Naive thymus-derived CD4-positive, alpha-beta T cell (primary cell): ENCODE measurements at regions of chr4 and their contacts with region 1.

Region 1: DNA sequence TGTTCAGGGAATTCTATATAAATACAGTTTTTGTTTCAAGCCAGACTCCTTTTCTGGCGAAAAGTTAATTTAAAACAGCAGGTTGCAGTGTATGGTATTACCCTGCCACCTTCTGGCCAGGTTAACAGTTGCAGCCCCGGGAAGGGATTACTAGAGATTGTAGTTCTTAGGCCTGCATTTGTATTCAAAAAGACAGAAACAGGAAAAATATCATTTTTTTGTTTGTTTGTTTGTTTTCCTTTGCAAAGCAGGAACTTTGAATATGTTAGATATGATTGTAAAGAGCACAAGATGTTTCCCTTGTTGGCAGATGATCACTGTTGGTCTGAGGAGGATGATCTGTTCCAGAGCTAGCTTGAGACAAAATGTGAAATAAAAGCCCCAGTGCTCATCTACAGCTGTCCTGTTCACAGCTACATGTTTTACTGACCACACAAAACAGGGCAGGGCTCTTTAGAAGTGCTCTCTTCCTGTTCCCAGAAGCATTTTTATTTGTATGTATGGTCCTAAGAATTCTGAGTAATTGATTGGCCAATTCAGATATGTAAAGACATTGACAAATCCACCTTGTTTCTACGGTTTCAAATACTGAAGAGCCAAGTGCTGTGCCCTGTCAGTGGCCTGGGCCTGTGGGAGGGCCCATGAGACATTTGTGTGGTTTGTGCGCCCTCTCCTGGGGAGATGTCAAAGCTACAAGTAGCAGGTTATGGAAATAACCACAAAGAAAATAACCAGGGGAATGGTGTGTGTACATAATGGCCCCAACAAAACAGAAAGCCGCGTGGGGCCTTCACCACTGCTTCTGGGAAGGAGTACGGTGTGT is 57.9 kb downstream of the CLDN22 start:
- DNase-seq: peak; percentile 41 to 72 (median 66)
- ATAC-seq: peak; percentile 95
- H3K4me3 ChIP-seq: no peak overlapping the region
- H3K4me3 Mint-ChIP-seq: no peak overlapping the region
- H3K27ac ChIP-seq: no peak overlapping the region
- H3K27ac Mint-ChIP-seq: peak overlapping the region in 8 of 9 donors; percentile 15 to 87 (median 78)
- H3K4me1 ChIP-seq: peaks cover 0 to 5% of the 10 kb centered on the region in 2 donors
- H3K4me1 Mint-ChIP-seq: peaks cover 3 to 12% (median 8%) of the 10 kb centered on the region in 7 donors
- H3K27me3 ChIP-seq: no peaks in the 10 kb centered on the region
- H3K27me3 Mint-ChIP-seq: peaks cover 0 to 4% (median 0%) of the 10 kb centered on the region in 5 donors

Region 2: DNA sequence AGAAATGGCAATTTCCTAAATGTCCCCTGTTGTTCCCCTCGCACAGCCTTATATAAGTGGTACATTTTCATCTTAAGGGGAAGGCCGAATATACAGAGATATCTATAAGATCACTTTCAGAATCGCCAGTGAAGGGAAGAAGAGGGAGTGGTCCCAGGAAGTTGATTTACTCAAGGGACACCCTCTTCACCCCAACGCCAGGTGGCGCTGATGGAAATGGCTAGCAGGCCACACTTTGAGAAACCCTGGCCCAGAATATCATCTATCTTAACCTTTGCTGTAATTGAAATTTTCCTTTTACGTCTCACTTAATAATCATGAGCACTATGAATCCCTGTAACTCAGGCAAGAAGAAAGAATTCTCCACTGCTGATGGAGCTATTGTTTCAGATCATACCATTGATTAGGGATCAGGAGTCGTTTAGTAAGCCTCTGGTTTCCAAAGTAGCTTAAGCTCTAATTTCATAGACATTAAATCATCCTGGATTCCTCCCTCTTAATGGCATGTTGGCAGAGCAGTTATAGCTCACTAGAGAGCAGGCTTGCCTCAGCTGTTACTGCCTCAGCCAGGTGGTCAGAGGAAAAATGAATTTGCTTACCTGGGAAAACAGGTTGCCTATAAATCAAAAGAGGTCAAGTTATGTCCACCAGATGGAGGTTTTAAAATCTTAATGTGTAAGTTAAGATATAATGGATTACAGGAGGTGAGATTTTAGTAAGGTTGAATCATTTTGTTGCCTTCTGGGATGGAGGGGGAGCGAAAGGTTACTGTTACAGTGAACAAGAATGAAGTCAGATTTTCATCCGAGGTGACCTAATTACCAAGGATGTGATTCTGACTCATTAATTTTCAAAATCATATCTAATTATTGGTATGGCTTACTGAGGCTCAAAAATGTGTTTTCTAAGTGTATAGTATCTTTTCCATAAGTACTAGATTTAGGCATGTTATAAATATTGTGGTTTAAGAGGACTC is 1960.1 kb before region 1 on chr4:
- CTCF ChIA-PET with region 1: no interaction called
- POLR2A ChIA-PET with region 1: no interaction called
- intact Hi-C with region 1: loop called in 1 of 2 experiments (anchors 5 kb)
- DNase-seq: no peak
- ATAC-seq: no peak
- H3K4me3 ChIP-seq: no peak overlapping the region
- H3K4me3 Mint-ChIP-seq: no peak overlapping the region
- H3K27ac ChIP-seq: no peak overlapping the region
- H3K27ac Mint-ChIP-seq: peak overlapping the region in 1 of 9 donors; percentile 25
- H3K4me1 ChIP-seq: no peaks in the 10 kb centered on the region
- H3K4me1 Mint-ChIP-seq: no peaks in the 10 kb centered on the region
- H3K27me3 ChIP-seq: no peaks in the 10 kb centered on the region
- H3K27me3 Mint-ChIP-seq: no peaks in the 10 kb centered on the region

Region 3: GRCh38 chr4:182806259-182807252 is 455.6 kb before region 1 on chr4:
- CTCF ChIA-PET with region 1: no interaction called
- POLR2A ChIA-PET with region 1: no interaction called
- intact Hi-C with region 1: loop called in 1 of 2 experiments (anchors 5 kb)
- DNase-seq: peak in 8 of 9 donors; percentile 24 to 74 (median 45)
- ATAC-seq: peak; percentile 47
- H3K4me3 ChIP-seq: no peak overlapping the region
- H3K4me3 Mint-ChIP-seq: peak overlapping the region; percentile 64 to 93 (median 80)
- H3K27ac ChIP-seq: no peak overlapping the region
- H3K27ac Mint-ChIP-seq: peak overlapping the region in 6 of 9 donors; percentile 68 to 79 (median 72)
- H3K4me1 ChIP-seq: peaks cover 8 to 16% of the 10 kb centered on the region in 2 donors
- H3K4me1 Mint-ChIP-seq: peaks cover 0 to 20% (median 8%) of the 10 kb centered on the region in 7 donors
- H3K27me3 ChIP-seq: no peaks in the 10 kb centered on the region
- H3K27me3 Mint-ChIP-seq: peaks cover 0 to 13% (median 4%) of the 10 kb centered on the region in 5 donors

Region 4: DNA sequence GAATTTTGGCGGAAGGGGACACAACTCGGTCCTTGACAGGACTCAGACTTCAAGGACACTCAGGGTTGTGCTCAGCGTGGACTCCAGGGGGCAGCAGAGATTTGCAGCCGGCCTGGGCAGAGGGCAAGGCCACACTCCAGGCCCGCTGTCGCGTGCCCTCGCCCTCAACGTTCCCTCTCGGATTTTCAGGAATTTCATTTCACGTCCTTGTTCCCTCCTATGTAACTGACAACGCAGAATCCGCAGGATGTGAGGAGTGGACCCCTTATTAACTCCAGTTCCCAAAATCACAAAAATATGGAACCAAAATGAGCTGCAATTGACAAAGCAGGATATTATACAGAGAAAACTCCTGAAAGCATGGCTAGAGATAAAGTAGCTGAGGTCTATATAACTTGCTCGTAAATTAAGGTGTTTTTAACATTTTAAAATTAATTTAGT is 323.9 kb before region 1 on chr4:
- CTCF ChIA-PET with region 1: interaction called, 16 read pairs
- POLR2A ChIA-PET with region 1: no interaction called
- intact Hi-C with region 1: loop called (anchors 1 kb)
- DNase-seq: peak; percentile 26 to 76 (median 48)
- ATAC-seq: peak; percentile 96
- H3K4me3 ChIP-seq: no peak overlapping the region
- H3K4me3 Mint-ChIP-seq: peak overlapping the region in 1 of 10 donors; percentile 21
- H3K27ac ChIP-seq: no peak overlapping the region
- H3K27ac Mint-ChIP-seq: no peak overlapping the region
- H3K4me1 ChIP-seq: no peaks in the 10 kb centered on the region
- H3K4me1 Mint-ChIP-seq: peaks cover 0 to 4% (median 0%) of the 10 kb centered on the region in 7 donors
- H3K27me3 ChIP-seq: no peaks in the 10 kb centered on the region
- H3K27me3 Mint-ChIP-seq: peaks cover 12 to 27% (median 15%) of the 10 kb centered on the region in 5 donors

Region 5: DNA sequence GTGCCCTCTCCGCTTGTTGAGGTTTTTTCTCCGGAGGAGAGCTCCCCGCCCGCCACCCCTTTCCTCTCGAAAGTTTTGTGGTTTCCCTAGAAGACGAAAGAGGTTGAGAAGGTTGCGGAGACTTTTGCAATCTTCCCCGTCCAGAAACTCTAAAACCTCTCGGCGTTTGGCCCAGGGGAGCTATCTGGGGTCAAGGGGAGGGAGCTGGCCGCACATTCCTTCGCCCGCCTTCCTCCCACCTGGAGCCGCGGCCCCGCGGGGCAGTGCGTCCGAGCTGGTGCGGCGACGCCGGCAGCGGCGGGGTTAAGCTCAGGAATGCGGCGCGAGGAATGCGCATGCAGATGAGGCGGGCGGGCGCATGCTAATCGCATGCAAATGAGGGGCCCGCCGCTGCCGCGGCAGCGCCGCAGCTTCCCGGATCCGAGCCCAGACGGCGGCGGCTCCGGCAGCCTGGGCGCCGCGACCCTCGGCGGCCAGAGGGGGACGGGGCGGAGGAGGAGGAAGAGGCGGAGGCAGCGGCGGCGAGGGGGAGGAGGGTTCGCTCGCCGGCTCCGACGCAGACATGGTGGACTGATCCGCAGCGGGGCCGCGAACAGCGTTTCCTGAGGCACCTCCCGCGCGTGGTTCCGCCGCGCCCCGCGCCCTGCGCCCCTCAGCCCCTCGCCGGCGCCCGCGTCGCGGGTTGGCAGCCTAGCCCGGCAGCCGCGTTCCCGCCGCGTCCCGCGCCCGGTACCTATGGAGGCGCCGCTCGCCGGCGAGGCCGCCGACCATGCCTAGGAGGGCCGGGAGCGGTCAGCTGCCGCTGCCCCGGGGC is 163.2 kb before region 1 on chr4 and contains the start of gene WWC2:
- CTCF ChIA-PET with region 1: interaction called, 4 read pairs
- POLR2A ChIA-PET with region 1: no interaction called
- intact Hi-C with region 1: loop called in 1 of 2 experiments (anchors 1 kb)
- DNase-seq: peak; percentile 40 to 68 (median 62)
- ATAC-seq: peak; percentile 85
- H3K4me3 ChIP-seq: peak within 1 kb of the TSS; percentile 75
- H3K4me3 Mint-ChIP-seq: peak within 1 kb of the TSS; percentile 51 to 87 (median 83)
- H3K27ac ChIP-seq: peak within 1 kb of the TSS; percentile 48
- H3K27ac Mint-ChIP-seq: peak within 1 kb of the TSS in 3 of 9 donors; percentile 56 to 72 (median 68)
- H3K4me1 ChIP-seq: peaks cover 0 to 4% of the 10 kb centered on the region in 2 donors
- H3K4me1 Mint-ChIP-seq: peaks cover 3 to 53% (median 34%) of the 10 kb centered on the region in 7 donors
- H3K27me3 ChIP-seq: peaks cover 0 to 2% of the 10 kb centered on the region in 2 donors
- H3K27me3 Mint-ChIP-seq: peaks cover 0 to 61% (median 0%) of the 10 kb centered on the region in 5 donors
- total RNA-seq, gene WWC2: 0.07 to 13.8 (median 10.9) TPM

Region 6: DNA sequence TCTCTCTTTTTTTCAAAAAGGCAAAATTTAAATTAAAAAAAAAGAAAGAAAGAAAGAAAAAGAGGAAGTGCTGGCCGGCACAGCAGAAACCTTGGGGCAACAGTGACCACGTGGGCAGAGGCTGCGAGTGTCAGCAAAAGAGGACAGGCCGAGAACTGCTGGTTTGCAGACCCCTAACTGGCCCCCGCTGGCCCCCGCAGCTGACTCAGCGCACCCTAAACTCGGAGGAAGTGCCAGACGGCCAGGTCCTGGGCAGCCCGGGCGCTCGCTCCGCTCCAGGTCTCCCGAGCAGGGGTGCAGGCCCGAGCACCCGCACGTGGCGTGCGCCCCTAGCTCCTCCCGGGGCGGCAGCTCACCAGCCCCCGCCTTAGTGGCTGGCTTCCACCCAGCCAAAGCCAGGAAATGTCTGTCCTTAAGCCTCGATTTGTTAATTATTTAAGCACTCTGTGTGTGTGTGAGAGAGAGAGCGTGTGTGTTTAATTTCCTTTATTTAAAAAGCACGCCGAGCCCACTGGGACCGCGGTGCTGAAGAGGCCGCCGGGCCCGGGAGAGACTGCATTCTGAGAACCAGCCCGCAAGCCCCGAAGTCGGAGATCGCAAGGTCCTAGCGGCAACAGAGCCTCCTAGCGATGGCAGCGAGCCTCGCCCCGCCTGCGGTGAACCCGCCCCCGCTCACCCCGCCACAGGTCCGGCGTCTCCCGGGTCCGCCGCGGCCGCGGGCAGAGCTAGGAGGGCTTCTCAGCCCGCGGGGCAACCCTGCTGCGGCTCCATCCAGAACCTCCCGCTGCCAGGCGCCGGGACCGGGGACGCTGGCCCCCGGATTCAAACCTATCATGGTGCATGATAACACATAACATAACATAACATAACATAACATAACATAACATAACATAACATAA is 136.3 kb after region 1 on chr4:
- CTCF ChIA-PET with region 1: interaction called, 3 read pairs
- POLR2A ChIA-PET with region 1: no interaction called
- intact Hi-C with region 1: loop called (anchors 1 to 2 kb)
- DNase-seq: peak; percentile 32 to 70 (median 57)
- ATAC-seq: peak; percentile 88
- H3K4me3 ChIP-seq: peak overlapping the region; percentile 76
- H3K4me3 Mint-ChIP-seq: peak overlapping the region; percentile 86 to 93 (median 90)
- H3K27ac ChIP-seq: peak overlapping the region; percentile 34
- H3K27ac Mint-ChIP-seq: peak overlapping the region; percentile 65 to 95 (median 82)
- H3K4me1 ChIP-seq: peaks cover 0 to 6% of the 10 kb centered on the region in 2 donors
- H3K4me1 Mint-ChIP-seq: peaks cover 17 to 34% (median 28%) of the 10 kb centered on the region in 7 donors
- H3K27me3 ChIP-seq: no peaks in the 10 kb centered on the region
- H3K27me3 Mint-ChIP-seq: peaks cover 0 to 45% (median 0%) of the 10 kb centered on the region in 5 donors

Region 7: DNA sequence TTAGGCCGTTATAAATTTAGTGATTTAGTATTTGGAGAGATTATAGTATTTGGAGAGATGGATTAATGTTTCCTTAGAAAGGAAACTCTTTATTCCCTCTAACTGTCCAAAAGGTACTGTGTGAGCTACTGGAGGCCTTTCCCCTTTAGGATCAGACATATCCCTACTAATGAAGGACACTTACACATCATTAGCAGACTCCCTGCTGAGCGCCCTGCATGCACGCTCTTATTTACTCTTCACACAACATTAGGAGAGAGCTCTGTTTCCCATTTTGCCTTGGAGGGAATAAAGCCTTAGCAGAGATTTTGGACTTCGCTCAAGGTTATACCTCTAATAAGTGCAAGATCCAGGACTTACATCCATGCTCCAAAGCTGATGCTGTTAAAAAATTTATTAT is 625.2 kb after region 1 on chr4:
- CTCF ChIA-PET with region 1: no interaction called
- POLR2A ChIA-PET with region 1: no interaction called
- intact Hi-C with region 1: no loop called
- DNase-seq: no peak
- ATAC-seq: no peak
- H3K4me3 ChIP-seq: no peak overlapping the region
- H3K4me3 Mint-ChIP-seq: no peak overlapping the region
- H3K27ac ChIP-seq: no peak overlapping the region
- H3K27ac Mint-ChIP-seq: no peak overlapping the region
- H3K4me1 ChIP-seq: no peaks in the 10 kb centered on the region
- H3K4me1 Mint-ChIP-seq: peaks cover 0 to 2% (median 0%) of the 10 kb centered on the region in 7 donors
- H3K27me3 ChIP-seq: no peaks in the 10 kb centered on the region
- H3K27me3 Mint-ChIP-seq: peaks cover 0 to 29% (median 14%) of the 10 kb centered on the region in 5 donors